ENCODE measurements at regions of chr2 and their contacts with region 1.

Region 1: GRCh38 chr2:88187038-88187676 is 17.0 kb downstream of the THNSL2 start:
- DNase-seq: peak; percentile 73 to 84
- H3K4me3 ChIP-seq: no peak overlapping the region
- H3K27ac ChIP-seq: no peak overlapping the region
- H3K4me1 ChIP-seq: peaks cover 3 to 5% (median 5%) of the 10 kb centered on the region in 4 experiments; a peak in 6 of 7 replicates
- H3K27me3 ChIP-seq: no peaks in the 10 kb centered on the region
- CTCF ChIP-seq: peak; percentile 84 to 94 (median 86)
- EP300 ChIP-seq: no peak
- POLR2A ChIP-seq: no peak
- RAD21 ChIP-seq: peak; percentile 89 to 90

Region 2: DNA sequence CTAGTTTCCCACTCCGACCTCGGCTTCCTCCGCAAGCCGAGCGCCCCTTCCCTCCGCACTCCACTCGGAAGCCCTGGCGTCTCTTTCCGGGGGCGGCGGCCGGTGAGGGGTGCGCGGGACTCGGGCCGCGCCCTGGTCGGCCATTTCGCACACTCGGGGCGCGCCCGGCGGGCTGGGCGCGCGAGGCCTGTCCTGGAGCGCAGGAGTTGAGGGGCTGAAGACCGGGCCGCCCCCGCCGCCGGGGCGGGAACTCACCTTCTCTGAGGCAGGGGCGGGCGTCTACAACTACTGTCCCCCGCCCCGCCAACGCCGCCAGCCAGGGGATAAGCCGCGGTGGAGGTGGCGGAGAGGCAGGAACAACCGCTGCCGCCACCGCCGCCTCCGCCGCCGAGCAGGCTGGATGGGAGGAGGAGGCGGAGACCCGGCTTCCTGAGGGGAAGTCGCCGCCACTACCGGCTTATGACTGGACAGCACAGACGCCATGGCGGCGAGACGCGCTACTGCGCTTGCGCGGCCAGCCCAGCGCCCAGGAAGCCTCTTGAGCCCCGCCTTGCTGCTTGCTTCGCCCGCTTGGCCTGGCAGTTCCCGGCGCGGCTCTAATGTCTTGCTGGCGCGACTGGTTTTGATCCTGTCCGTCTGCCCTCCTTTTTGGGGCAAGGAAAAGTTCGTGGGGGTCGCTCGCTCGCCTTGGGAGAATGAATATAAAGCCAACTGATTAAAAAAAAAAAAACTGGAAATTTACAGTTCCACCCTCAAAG is 131.6 kb before region 1 on chr2 and contains the start of gene KRCC1:
- CTCF ChIA-PET with region 1: interaction called, 32 read pairs
- POLR2A ChIA-PET with region 1: interaction called, 4 read pairs
- DNase-seq: peak; percentile 93
- H3K4me3 ChIP-seq: peak within 1 kb of the TSS; percentile 88 to 99 (median 93)
- H3K27ac ChIP-seq: peak within 1 kb of the TSS; percentile 84
- H3K4me1 ChIP-seq: peaks cover 0 to 9% (median 4%) of the 10 kb centered on the region in 4 experiments; a peak in 5 of 7 replicates
- H3K27me3 ChIP-seq: no peaks in the 10 kb centered on the region
- CTCF ChIP-seq: no peak
- EP300 ChIP-seq: no peak
- POLR2A ChIP-seq: peak; percentile 79 to 86
- RAD21 ChIP-seq: no peak
- total RNA-seq, gene KRCC1: 7.7 and 8.5 TPM in 2 replicates

Region 3: GRCh38 chr2:88212251-88212790 is 25.2 kb after region 1 on chr2:
- CTCF ChIA-PET with region 1: interaction called, 22 read pairs
- POLR2A ChIA-PET with region 1: interaction called, 3 read pairs
- DNase-seq: peak in 1 of 2 experiments; percentile 54
- H3K4me3 ChIP-seq: peak overlapping the region in 1 of 4 experiments; percentile 41; a peak in 1 of 8 replicates
- H3K27ac ChIP-seq: peak overlapping the region; percentile 58; the same call in 1 of the 2 replicates
- H3K4me1 ChIP-seq: peaks cover 4 to 5% (median 4%) of the 10 kb centered on the region in 4 experiments; a peak in 6 of 7 replicates
- H3K27me3 ChIP-seq: no peaks in the 10 kb centered on the region
- CTCF ChIP-seq: peak; percentile 61 to 85 (median 76)
- EP300 ChIP-seq: no peak
- POLR2A ChIP-seq: no peak
- RAD21 ChIP-seq: peak; percentile 43 to 56; a peak in 3 of 4 replicates

Region 4: DNA sequence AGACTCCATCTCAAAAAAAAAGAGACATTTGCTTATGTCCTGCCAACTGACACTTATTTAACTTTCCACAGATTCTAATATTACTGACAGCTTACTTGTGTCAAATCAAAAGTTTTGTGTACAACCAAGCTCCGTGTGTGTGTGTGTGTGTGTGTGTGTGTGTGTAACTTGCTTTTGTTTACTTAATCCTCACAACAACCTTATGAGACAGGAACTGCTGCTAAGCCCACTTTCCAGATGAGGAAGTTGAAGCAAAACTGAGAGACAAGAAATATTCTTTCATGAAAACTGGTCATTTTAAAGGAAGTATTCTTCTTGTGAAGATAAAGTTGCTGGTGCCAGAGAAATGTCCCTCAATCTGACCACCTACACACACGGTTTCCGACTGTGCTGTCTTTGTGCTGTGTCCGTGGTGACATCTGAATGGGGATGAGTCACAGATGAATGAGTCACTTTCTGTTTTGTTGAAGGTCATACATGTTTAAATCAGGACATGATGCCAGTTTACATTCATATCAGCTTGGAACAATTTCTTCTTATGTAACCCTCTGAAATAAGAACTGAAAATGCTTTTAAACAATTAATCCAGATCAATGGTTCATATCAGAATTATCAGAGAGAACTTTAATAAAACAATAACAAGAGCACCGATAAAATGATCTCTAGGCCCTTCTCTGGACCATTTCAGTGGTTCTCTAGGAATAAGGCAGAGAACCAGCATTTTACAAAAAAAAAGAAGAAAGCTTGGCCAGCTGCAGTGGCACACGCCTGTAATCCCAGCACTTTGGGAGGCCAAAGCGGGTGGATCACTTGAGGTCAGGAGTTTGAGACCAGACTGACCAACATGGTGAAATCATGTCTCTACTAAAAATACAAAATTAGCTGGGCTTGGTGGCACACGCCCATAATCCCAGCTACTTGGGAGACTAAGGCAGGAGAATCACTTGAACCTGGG is 78.5 kb after region 1 on chr2:
- CTCF ChIA-PET with region 1: interaction called, 14 read pairs
- POLR2A ChIA-PET with region 1: no interaction called
- DNase-seq: no peak
- H3K4me3 ChIP-seq: no peak overlapping the region
- H3K27ac ChIP-seq: no peak overlapping the region
- H3K4me1 ChIP-seq: no peaks in the 10 kb centered on the region
- H3K27me3 ChIP-seq: peaks cover 0 to 1% (median 0%) of the 10 kb centered on the region in 4 experiments; a peak in 1 of 7 replicates
- CTCF ChIP-seq: no peak
- EP300 ChIP-seq: no peak
- POLR2A ChIP-seq: no peak
- RAD21 ChIP-seq: no peak

Region 5: GRCh38 chr2:88329815-88330603 is 142.9 kb after region 1 on chr2:
- CTCF ChIA-PET with region 1: interaction called, 11 read pairs
- POLR2A ChIA-PET with region 1: no interaction called
- DNase-seq: peak; percentile 54 to 77
- H3K4me3 ChIP-seq: no peak overlapping the region
- H3K27ac ChIP-seq: no peak overlapping the region
- H3K4me1 ChIP-seq: peaks cover 2 to 12% (median 9%) of the 10 kb centered on the region in 4 experiments; a peak in 6 of 7 replicates
- H3K27me3 ChIP-seq: no peaks in the 10 kb centered on the region
- CTCF ChIP-seq: no peak
- EP300 ChIP-seq: no peak
- POLR2A ChIP-seq: no peak
- RAD21 ChIP-seq: no peak

Region 6: GRCh38 chr2:88458633-88459032 is 271.5 kb after region 1 on chr2:
- CTCF ChIA-PET with region 1: interaction called, 81 read pairs
- POLR2A ChIA-PET with region 1: interaction called, 3 read pairs
- DNase-seq: no peak
- H3K4me3 ChIP-seq: no peak overlapping the region
- H3K27ac ChIP-seq: no peak overlapping the region
- H3K4me1 ChIP-seq: no peaks in the 10 kb centered on the region; a peak in 1 of 7 replicates
- H3K27me3 ChIP-seq: peaks cover 0 to 4% (median under 1%) of the 10 kb centered on the region in 4 experiments; a peak in 3 of 7 replicates
- CTCF ChIP-seq: no peak
- EP300 ChIP-seq: no peak
- POLR2A ChIP-seq: no peak
- RAD21 ChIP-seq: no peak

Region 7: DNA sequence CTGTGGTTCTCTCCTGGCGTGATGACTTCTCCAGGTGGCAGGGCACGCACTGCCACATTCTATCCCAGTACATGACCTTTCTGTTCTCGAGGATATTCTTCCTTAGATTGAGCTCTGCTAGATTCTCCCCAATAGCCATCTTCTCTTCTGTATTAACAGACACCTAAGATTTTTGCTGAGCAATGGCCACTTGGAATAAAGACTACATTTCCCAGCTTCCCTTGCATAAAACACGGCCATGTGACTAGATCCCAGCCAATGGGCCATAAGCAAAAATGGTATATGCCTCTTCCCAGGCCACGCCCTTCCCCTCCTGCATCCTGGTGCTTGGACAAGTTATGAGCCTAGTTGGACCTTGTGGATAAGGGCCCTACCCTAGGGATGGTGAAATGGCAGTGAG is 358.0 kb after region 1 on chr2:
- CTCF ChIA-PET with region 1: interaction called, 11 read pairs
- POLR2A ChIA-PET with region 1: no interaction called
- DNase-seq: no peak
- H3K4me3 ChIP-seq: no peak overlapping the region
- H3K27ac ChIP-seq: no peak overlapping the region
- H3K4me1 ChIP-seq: peaks cover 0 to 5% (median 0%) of the 10 kb centered on the region in 4 experiments; a peak in 2 of 7 replicates
- H3K27me3 ChIP-seq: no peaks in the 10 kb centered on the region
- CTCF ChIP-seq: no peak
- EP300 ChIP-seq: no peak
- POLR2A ChIP-seq: no peak
- RAD21 ChIP-seq: no peak